ENCODE measurements at regions of chr9 and their contacts with region 1.

Region 1: DNA sequence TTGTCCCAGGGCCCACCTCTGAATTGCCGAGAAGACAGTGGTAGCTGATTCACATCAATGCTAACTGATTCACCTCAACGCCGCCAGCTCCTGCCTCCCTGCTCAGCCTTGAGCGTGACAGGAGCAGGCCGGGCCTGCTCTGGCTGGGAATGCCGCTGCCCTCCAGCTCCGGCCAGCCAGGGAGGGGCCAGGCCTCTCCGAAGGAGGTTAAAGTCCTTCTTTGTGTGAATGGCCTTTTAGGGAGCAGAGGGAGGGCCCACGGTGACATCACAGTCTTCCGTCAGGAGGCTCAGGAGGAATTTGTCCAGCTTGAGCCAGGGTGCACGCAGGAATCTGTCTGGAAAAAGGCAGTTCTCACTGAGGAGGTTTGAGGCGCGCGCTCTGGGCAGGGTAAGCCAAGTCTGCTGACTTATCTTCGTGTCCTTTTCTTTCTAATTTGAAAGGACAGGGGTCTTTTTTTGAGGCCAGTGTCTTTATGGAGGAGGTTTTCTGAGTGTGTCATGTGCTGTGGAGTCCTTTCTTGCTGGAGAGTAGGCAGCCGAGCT is 82.7 kb downstream of the C9orf152 start:
- DNase-seq: peak; percentile 93

Region 2: DNA sequence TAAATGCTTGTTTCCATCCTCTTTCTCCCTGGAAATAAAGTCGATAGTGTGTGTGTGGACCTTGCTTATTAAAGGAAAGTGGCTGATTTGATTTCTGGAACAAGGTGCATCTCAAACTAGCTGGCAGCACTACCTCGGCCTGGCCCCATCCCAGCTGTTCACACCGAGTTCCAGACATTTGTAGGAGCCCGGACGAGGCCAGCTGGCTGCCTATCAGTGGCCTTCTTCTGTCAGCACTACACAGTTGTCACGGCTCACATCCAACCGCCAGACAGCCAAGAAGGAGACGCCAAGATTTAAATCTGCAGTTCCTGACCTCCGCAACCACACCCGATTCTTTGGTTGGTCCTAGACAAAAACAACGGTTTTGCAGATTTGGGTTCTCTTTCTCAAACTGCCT is 281.6 kb before region 1 on chr9:
- intact Hi-C with region 1: no loop called
- DNase-seq: peak; percentile 91

Region 3: GRCh38 chr9:109914280-109915027 is 210.8 kb before region 1 on chr9:
- intact Hi-C with region 1: loop called (anchors 5 kb)
- DNase-seq: no peak

Region 4: GRCh38 chr9:109972026-109972882 is 153.0 kb before region 1 on chr9:
- intact Hi-C with region 1: loop called (anchors 5 kb)
- DNase-seq: no peak

Region 5: GRCh38 chr9:110069326-110070248 is 55.7 kb before region 1 on chr9:
- intact Hi-C with region 1: loop called (anchors 5 kb)
- DNase-seq: peak; percentile 87

Region 6: GRCh38 chr9:110088099-110088498 is 37.2 kb before region 1 on chr9:
- intact Hi-C with region 1: no loop called
- DNase-seq: no peak

Measured in cardiac septum (tissue), 1 donor.